Naive thymus-derived CD4-positive, alpha-beta T cell (primary cell): ENCODE measurements at regions of chr11 and their contacts with region 1.

Region 1: GRCh38 chr11:117178210-117179034 is at the start of gene SIDT2:
- DNase-seq: peak; percentile 75 to 89 (median 87)
- ATAC-seq: peak; percentile 94
- H3K4me3 ChIP-seq: peak within 1 kb of the TSS; percentile 87
- H3K4me3 Mint-ChIP-seq: peak within 1 kb of the TSS; percentile 92 to 98 (median 94)
- H3K27ac ChIP-seq: peak within 1 kb of the TSS; percentile 85
- H3K27ac Mint-ChIP-seq: peak within 1 kb of the TSS; percentile 88 to 98 (median 96)
- H3K4me1 ChIP-seq: peaks cover 12 to 26% of the 10 kb centered on the region in 2 donors
- H3K4me1 Mint-ChIP-seq: peaks cover 26 to 42% (median 32%) of the 10 kb centered on the region in 7 donors
- H3K27me3 ChIP-seq: no peaks in the 10 kb centered on the region
- H3K27me3 Mint-ChIP-seq: no peaks in the 10 kb centered on the region
- total RNA-seq, gene SIDT2: 31.7 to 187 (median 60.5) TPM

Region 2: DNA sequence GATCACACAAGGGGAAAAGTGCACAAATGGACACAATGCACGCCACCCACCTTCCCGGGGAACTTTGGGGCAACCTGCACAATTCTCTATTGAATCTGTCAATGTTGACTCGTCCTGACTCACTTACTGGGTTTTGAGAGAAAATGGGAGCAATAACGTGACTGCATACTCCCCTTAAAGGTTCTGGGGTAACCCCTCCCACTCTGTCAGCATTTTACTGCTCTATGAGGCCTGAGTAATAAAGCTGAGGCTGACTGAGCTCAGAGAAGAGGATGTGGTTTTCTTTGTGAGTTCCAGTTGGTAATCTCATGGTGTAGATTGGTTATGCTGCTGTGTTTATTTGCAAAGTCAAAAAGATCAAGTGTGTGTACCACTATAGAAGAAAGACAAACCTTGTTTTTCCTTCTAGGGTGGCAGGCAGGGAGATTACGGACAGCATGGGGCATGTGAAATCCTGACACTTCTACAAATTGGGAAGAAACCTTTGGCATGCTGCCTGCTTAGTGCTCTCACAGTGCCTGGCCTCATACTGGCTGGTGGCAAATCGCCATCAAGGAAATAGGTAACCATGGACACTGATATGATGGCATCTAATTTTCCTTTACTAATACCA is 324.9 kb before region 1 on chr11:
- CTCF ChIA-PET with region 1: no interaction called
- POLR2A ChIA-PET with region 1: no interaction called
- intact Hi-C with region 1: loop called (anchors 1 kb)
- DNase-seq: peak in 8 of 9 donors; percentile 53 to 84 (median 77)
- ATAC-seq: peak; percentile 98
- H3K4me3 ChIP-seq: peak overlapping the region; percentile 38
- H3K4me3 Mint-ChIP-seq: peak overlapping the region; percentile 47 to 84 (median 70)
- H3K27ac ChIP-seq: peak overlapping the region; percentile 4
- H3K27ac Mint-ChIP-seq: peak overlapping the region; percentile 41 to 92 (median 81)
- H3K4me1 ChIP-seq: peaks cover 57 to 70% of the 10 kb centered on the region in 2 donors
- H3K4me1 Mint-ChIP-seq: peaks cover 52 to 78% (median 76%) of the 10 kb centered on the region in 7 donors
- H3K27me3 ChIP-seq: no peaks in the 10 kb centered on the region
- H3K27me3 Mint-ChIP-seq: no peaks in the 10 kb centered on the region

Region 3: DNA sequence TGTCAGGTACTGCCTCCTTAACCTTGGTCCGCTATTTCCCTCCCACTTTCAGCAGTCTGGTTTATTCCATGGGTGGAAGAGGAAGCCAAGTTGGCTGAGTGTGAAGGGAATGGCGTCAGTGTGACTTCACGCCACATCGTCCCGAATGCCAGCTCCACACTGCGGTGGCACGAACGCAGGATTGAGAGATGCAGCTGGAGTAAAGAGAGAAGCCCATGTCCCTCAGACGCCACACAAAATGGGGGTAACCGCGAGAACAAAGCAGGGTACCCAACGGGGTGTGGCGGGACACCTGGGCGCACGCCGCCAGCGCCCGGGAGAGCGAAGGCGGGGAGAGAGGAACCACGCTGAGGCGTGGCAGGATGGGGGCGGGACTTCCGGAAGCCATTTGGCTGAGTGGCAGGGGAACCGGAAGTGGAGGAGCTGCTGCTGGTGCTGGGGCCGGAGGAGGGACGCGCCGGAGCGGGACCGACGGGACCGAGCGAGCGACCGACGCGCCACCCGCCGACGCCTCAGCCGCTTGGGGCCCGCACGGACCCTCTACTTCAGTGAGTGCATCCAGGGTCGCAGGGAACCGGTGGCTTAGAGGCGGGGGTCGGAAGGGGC is 34.4 kb before region 1 on chr11 and contains the start of gene PAFAH1B2:
- CTCF ChIA-PET with region 1: interaction called, 3 read pairs
- POLR2A ChIA-PET with region 1: interaction called, 42 read pairs
- intact Hi-C with region 1: loop called (anchors 1 to 5 kb)
- DNase-seq: peak; percentile 88 to 95 (median 94)
- ATAC-seq: peak; percentile 94
- H3K4me3 ChIP-seq: peak within 1 kb of the TSS; percentile 89
- H3K4me3 Mint-ChIP-seq: peak within 1 kb of the TSS; percentile 88 to 100 (median 97)
- H3K27ac ChIP-seq: peak within 1 kb of the TSS; percentile 85
- H3K27ac Mint-ChIP-seq: peak within 1 kb of the TSS; percentile 90 to 98 (median 97)
- H3K4me1 ChIP-seq: peaks cover 6 to 10% of the 10 kb centered on the region in 2 donors
- H3K4me1 Mint-ChIP-seq: peaks cover 28 to 57% (median 44%) of the 10 kb centered on the region in 7 donors
- H3K27me3 ChIP-seq: no peaks in the 10 kb centered on the region
- H3K27me3 Mint-ChIP-seq: peaks cover 11 to 24% (median 12%) of the 10 kb centered on the region in 5 donors
- total RNA-seq, gene PAFAH1B2: 48.9 to 62.0 (median 55.8) TPM

Region 4: GRCh38 chr11:117197516-117198456 is 19.4 kb after region 1 on chr11:
- CTCF ChIA-PET with region 1: interaction called, 5 read pairs
- POLR2A ChIA-PET with region 1: interaction called, 3 read pairs
- intact Hi-C with region 1: loop called in 1 of 2 experiments (anchors 2 kb)
- DNase-seq: no peak
- ATAC-seq: no peak
- H3K4me3 ChIP-seq: no peak overlapping the region
- H3K4me3 Mint-ChIP-seq: no peak overlapping the region
- H3K27ac ChIP-seq: no peak overlapping the region
- H3K27ac Mint-ChIP-seq: peak overlapping the region in 6 of 9 donors; percentile 19 to 77 (median 57)
- H3K4me1 ChIP-seq: no peaks in the 10 kb centered on the region
- H3K4me1 Mint-ChIP-seq: peaks cover 3 to 12% (median 5%) of the 10 kb centered on the region in 7 donors
- H3K27me3 ChIP-seq: no peaks in the 10 kb centered on the region
- H3K27me3 Mint-ChIP-seq: no peaks in the 10 kb centered on the region

Region 5: DNA sequence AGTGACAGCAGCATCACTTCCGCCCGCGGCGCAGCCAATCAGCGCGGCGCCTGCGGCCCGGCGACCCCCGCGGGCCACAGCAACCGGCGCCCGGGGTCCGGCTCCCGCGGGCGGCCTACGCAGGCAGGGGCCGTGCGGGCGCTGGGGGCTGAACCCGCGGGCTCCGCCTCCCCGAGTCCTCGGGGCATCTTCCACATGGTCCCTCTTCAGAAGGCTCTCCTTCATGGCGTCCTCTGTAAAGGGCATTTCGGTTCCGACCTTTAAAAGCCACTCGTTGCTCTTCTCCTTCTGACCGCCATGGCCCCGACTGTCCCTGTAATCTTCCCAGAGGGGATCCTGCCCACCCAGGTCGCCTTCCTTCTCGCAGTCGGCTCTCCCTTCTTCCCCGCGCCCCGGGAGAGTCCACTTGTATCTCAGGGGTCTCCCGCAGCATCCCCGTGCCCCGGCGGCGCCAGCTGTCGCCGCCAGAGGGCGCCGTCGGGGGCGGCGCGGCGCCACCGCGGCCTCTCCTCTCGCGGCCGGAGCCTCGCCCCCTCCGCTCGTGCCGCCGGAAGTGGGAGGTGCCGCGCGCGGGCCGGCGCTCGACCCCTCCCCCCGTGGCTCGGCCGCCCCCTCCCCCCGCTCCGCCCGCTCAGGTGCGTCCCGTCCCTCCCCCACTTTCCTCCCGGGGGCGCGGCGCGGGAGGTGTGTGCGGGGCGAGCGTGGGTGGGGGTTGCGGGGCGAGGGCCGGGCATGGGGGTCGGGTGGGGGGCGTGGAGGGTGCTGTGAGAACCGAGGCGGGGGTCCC is 53.9 kb after region 1 on chr11 and contains the start of gene RNF214:
- CTCF ChIA-PET with region 1: interaction called, 20 read pairs
- POLR2A ChIA-PET with region 1: interaction called, 37 read pairs
- intact Hi-C with region 1: loop called (anchors 1 kb)
- DNase-seq: peak; percentile 61 to 84 (median 73)
- ATAC-seq: peak; percentile 92
- H3K4me3 ChIP-seq: peak within 1 kb of the TSS; percentile 96
- H3K4me3 Mint-ChIP-seq: peak within 1 kb of the TSS; percentile 91 to 100 (median 98)
- H3K27ac ChIP-seq: peak within 1 kb of the TSS; percentile 97
- H3K27ac Mint-ChIP-seq: peak within 1 kb of the TSS; percentile 94 to 100 (median 99)
- H3K4me1 ChIP-seq: peaks cover 32 to 35% of the 10 kb centered on the region in 2 donors
- H3K4me1 Mint-ChIP-seq: peaks cover 40 to 55% (median 50%) of the 10 kb centered on the region in 7 donors
- H3K27me3 ChIP-seq: no peaks in the 10 kb centered on the region
- H3K27me3 Mint-ChIP-seq: no peaks in the 10 kb centered on the region
- total RNA-seq, gene RNF214: 16.6 to 36.0 (median 24.0) TPM

Region 6: GRCh38 chr11:117327567-117328374 is 149.3 kb after region 1 on chr11 and contains the start of gene CEP164:
- CTCF ChIA-PET with region 1: no interaction called
- POLR2A ChIA-PET with region 1: interaction called, 3 read pairs
- intact Hi-C with region 1: loop called (anchors 2 to 10 kb)
- DNase-seq: peak; percentile 76 to 95 (median 93)
- ATAC-seq: peak; percentile 96
- H3K4me3 ChIP-seq: peak within 1 kb of the TSS; percentile 66
- H3K4me3 Mint-ChIP-seq: peak within 1 kb of the TSS in 8 of 10 donors; percentile 26 to 69 (median 44)
- H3K27ac ChIP-seq: peak within 1 kb of the TSS; percentile 79
- H3K27ac Mint-ChIP-seq: peak within 1 kb of the TSS in 4 of 9 donors; percentile 11 to 81 (median 68)
- H3K4me1 ChIP-seq: peaks cover 0 to 10% of the 10 kb centered on the region in 2 donors
- H3K4me1 Mint-ChIP-seq: peaks cover 0 to 19% (median 14%) of the 10 kb centered on the region in 7 donors
- H3K27me3 ChIP-seq: no peaks in the 10 kb centered on the region
- H3K27me3 Mint-ChIP-seq: peaks cover 0 to 4% (median 0%) of the 10 kb centered on the region in 5 donors
- total RNA-seq, gene CEP164: 36.6 to 47.6 (median 36.8) TPM